RWPE1 (cell line): ENCODE measurements at regions of chr20 and their contacts with region 1.

Region 1: DNA sequence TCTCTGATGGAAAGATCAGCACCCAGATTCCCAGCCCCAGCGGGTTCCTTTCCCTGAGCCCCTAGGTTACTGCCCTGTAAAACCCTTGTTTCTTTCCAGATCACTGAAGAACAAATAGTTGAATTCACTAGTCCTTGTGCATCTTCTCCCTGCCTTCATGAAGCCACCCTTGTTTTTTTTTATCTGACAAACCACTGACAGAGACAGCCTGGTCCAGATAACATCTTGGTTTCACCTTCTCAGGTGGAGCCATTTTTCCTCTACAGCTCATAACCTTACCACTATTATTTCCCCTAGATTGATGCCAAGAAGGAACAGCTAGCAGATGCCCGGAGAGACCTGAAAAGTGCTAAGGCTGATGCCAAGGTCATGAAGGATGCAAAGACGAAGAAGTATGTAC is 15.9 kb upstream of the PLCG1 start:
- DNase-seq: no peak
- H3K27ac ChIP-seq: no peak overlapping the region
- CTCF ChIP-seq: no peak

Region 2: DNA sequence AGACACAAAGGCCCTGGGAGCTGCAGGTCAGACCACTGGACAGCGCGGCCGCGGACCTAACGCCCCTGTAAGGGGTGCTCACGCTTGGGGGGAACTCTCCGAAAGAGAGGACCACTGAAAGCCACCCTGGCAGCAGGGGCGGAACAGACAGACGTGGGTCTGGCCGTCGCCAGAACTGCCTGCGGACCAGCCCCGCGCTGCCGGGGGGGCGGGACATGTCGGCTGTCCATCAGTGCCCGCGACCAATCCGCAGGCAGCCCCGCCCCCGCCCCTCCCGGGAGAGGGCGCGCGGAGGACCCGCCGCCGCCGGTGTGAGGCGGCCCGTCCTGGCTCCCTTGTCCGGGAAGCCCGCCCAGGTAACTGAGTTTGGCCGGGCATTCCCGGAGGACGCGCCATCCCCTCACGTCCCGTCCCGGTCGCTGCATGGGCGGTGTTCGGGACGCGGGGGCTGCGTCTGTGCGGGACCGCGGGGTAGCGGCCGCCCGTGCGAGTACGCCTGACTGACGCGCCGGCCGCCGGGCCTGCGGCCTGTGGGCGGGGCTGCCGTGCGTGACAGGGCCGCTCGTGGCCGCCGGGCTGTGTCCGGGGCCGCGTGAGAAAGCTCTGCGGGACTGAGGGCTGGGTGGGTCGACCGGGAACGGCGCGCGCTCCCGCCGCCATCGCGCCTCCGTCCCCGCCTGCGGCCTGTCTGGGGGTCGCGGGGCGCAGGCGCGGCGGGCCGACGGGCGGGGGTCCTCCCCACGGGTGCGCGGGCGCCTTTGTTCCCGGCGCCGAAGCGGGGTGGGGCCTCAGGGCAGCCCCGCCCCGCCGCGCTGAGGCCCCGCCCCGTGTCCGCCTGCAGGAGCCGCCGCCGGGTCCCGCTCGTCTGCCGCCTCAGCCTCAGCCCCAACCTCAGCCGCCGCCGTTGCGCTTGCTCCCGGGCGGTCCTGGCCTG is 15.5 kb after region 1 on chr20 and contains the start of gene PLCG1:
- CTCF ChIA-PET with region 1: interaction called, 12 read pairs
- POLR2A ChIA-PET with region 1: no interaction called
- DNase-seq: peak; percentile 99
- H3K27ac ChIP-seq: peak within 1 kb of the TSS; percentile 91
- CTCF ChIP-seq: no peak